B cell (primary cell): ENCODE measurements at regions of chr7 and their contacts with region 1.

Region 1: DNA sequence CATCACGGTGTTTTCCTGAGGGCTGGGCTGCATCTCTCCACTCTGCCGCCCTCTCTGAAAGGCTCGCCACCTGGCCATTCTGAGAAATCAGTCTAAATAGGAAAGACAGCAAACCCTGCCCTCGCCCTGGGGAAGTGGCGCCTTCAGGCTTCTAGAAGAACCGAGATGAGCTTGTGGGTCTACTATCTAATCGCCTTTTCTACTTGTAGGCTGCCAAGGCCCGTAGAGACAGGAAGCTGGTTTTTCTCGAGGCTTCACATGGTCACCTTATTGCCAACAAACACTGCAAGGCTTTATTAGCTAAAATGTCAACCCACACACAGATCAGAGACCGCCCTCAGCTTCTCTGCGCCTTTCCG is 21.4 kb downstream of the LAT2 start:
- DNase-seq: peak; percentile 92
- ATAC-seq: peak; percentile 84
- H3K4me3 ChIP-seq: no peak overlapping the region
- H3K4me3 Mint-ChIP-seq: peak overlapping the region; percentile 79
- H3K27ac ChIP-seq: peak overlapping the region; percentile 83 to 92
- H3K27ac Mint-ChIP-seq: peak overlapping the region; percentile 97
- H3K4me1 ChIP-seq: peaks cover 59 to 83% of the 10 kb centered on the region in 2 donors
- H3K4me1 Mint-ChIP-seq: peaks cover 59% of the 10 kb centered on the region
- H3K27me3 ChIP-seq: no peaks in the 10 kb centered on the region
- H3K27me3 Mint-ChIP-seq: no peaks in the 10 kb centered on the region
- CTCF ChIP-seq: no peak

Region 2: DNA sequence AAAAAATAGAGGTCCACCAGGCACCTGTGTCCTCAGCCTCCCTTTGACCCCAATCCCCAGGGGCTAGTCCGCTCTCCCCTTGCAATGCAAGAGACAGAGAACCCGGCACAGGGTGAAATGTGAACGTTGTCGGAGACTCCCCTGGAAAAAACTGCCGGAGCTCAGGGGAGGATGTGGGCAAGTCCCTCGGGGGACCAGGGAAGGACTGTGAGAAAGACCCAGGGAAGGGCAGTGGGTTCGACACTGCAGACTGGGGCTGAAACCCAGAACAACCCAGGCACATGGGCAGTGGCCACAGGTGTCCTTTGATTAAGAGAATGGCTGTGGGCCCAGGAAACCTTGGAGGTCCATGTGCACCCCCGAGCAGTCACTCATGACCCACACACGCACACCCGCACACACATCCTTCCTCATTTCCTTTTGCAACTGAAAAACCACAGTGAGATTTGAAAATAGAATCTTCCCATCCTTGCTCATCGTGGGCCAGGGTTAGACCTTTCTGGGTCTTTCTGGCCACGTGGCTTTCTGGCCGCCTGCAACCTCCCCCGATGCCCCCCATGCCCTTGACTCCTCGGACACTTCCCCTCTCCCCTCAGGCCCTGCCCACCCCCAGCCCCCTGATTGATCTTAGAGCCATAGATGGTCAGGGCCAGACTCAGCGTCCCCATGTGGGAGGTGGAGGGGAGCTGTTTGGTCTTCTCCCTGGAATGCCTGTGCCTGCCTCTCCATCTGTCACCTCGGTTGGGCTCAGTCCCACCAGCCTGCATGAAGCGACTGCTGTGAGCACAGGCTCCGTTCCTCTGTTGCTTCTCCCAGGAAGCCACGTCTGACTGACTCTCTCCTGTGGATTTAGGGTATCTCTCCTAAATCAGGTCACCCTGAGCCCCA is 13.5 kb before region 1 on chr7:
- CTCF ChIA-PET with region 1: interaction called, 4 read pairs
- POLR2A ChIA-PET with region 1: interaction called, 19 read pairs
- intact Hi-C with region 1: loop called (anchors 1 kb)
- DNase-seq: peak; percentile 81
- ATAC-seq: peak; percentile 58
- H3K4me3 ChIP-seq: peak overlapping the region in 2 of 5 experiments; percentile 31 to 38
- H3K4me3 Mint-ChIP-seq: peak overlapping the region; percentile 81
- H3K27ac ChIP-seq: peak overlapping the region; percentile 64 to 70
- H3K27ac Mint-ChIP-seq: peak overlapping the region; percentile 92
- H3K4me1 ChIP-seq: peaks cover 46 to 67% of the 10 kb centered on the region in 2 donors
- H3K4me1 Mint-ChIP-seq: peaks cover 51% of the 10 kb centered on the region
- H3K27me3 ChIP-seq: no peaks in the 10 kb centered on the region
- H3K27me3 Mint-ChIP-seq: no peaks in the 10 kb centered on the region
- CTCF ChIP-seq: no peak

Region 3: GRCh38 chr7:74242122-74242443 is 10.9 kb after region 1 on chr7:
- CTCF ChIA-PET with region 1: interaction called, 11 read pairs
- POLR2A ChIA-PET with region 1: interaction called, 10 read pairs
- intact Hi-C with region 1: loop called (anchors 1 kb)
- DNase-seq: no peak
- ATAC-seq: peak; percentile 23
- H3K4me3 ChIP-seq: peak overlapping the region in 3 of 5 experiments; percentile 0 to 45 (median 33)
- H3K4me3 Mint-ChIP-seq: peak overlapping the region; percentile 88
- H3K27ac ChIP-seq: no peak overlapping the region
- H3K27ac Mint-ChIP-seq: peak overlapping the region; percentile 88
- H3K4me1 ChIP-seq: peaks cover 35 to 39% of the 10 kb centered on the region in 2 donors
- H3K4me1 Mint-ChIP-seq: peaks cover 28% of the 10 kb centered on the region
- H3K27me3 ChIP-seq: no peaks in the 10 kb centered on the region
- H3K27me3 Mint-ChIP-seq: no peaks in the 10 kb centered on the region
- CTCF ChIP-seq: no peak

Region 4: GRCh38 chr7:74254129-74254857 is 23.1 kb after region 1 on chr7 and contains the start of gene RFC2:
- CTCF ChIA-PET with region 1: no interaction called
- POLR2A ChIA-PET with region 1: interaction called, 3 read pairs
- intact Hi-C with region 1: loop called (anchors 1 kb)
- DNase-seq: peak; percentile 97
- ATAC-seq: peak; percentile 97
- H3K4me3 ChIP-seq: peak within 1 kb of the TSS; percentile 72 to 99 (median 91)
- H3K4me3 Mint-ChIP-seq: peak within 1 kb of the TSS; percentile 97
- H3K27ac ChIP-seq: peak within 1 kb of the TSS; percentile 66 to 90
- H3K27ac Mint-ChIP-seq: peak within 1 kb of the TSS; percentile 95
- H3K4me1 ChIP-seq: peaks cover 16 to 44% of the 10 kb centered on the region in 2 donors
- H3K4me1 Mint-ChIP-seq: peaks cover 30% of the 10 kb centered on the region
- H3K27me3 ChIP-seq: no peaks in the 10 kb centered on the region
- H3K27me3 Mint-ChIP-seq: no peaks in the 10 kb centered on the region
- CTCF ChIP-seq: peak; percentile 29
- total RNA-seq, gene RFC2: 33.2 and 36.4 TPM in 2 replicates

Region 5: GRCh38 chr7:74272305-74273038 is 41.3 kb after region 1 on chr7:
- CTCF ChIA-PET with region 1: no interaction called
- POLR2A ChIA-PET with region 1: interaction called, 4 read pairs
- intact Hi-C with region 1: loop called (anchors 5 kb)
- DNase-seq: peak; percentile 65
- ATAC-seq: peak; percentile 70
- H3K4me3 ChIP-seq: peak overlapping the region in 2 of 5 experiments; percentile 5 to 18
- H3K4me3 Mint-ChIP-seq: peak overlapping the region; percentile 85
- H3K27ac ChIP-seq: no peak overlapping the region
- H3K27ac Mint-ChIP-seq: peak overlapping the region; percentile 87
- H3K4me1 ChIP-seq: peaks cover 16 to 44% of the 10 kb centered on the region in 2 donors
- H3K4me1 Mint-ChIP-seq: peaks cover 39% of the 10 kb centered on the region
- H3K27me3 ChIP-seq: no peaks in the 10 kb centered on the region
- H3K27me3 Mint-ChIP-seq: no peaks in the 10 kb centered on the region
- CTCF ChIP-seq: no peak